Breast epithelium (tissue), 4 donors: ENCODE measurements at regions of chr7 and their contacts with region 1.

Region 1: DNA sequence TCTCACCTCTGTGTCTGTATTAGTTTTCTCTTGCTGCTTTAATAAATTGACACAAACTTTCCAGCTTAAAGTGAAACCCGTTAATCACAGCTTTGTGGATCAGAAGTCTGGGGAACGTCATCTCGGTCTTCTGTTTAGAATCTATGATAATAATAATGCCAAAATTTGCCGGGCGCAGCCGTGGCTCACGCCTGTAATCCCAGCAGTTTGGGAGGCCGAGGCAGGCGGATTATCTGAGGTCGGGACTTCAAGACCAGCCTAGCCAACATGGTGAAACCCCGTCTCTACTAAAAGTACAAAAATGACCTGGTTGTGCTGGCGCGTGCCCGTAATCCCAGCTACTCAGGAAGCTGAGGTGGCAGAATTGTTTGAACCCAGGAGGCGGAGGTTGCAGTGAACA is 8.8 kb upstream of the ZPBP start:
- DNase-seq: no peak
- H3K4me3 ChIP-seq: no peak overlapping the region
- H3K27ac ChIP-seq: no peak overlapping the region
- H3K4me1 ChIP-seq: no peaks in the 10 kb centered on the region
- H3K27me3 ChIP-seq: peaks cover 0 to 5% of the 10 kb centered on the region in 2 donors
- CTCF ChIP-seq: no peak
- POLR2A ChIP-seq: no peak

Region 2: DNA sequence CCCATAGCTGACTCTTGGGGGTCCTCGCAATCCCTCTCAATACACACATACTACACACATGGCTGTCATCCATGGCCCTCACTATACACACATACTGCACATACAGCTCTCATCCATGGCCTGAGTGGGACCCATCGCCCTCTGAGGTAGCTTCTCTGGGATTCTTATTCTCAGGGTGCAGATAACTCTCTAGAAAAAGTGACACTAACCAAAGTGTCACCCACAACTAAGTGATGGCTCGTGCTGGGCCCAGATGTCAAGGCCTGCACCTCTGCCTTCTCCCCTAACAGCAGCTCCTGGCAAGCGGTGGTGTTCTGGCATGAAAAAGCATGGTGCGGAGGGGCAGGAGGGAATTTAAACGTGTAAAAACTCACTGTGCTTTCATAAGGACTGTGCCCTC is 53.9 kb after region 1 on chr7:
- intact Hi-C with region 1: loop called (anchors 2 kb)
- DNase-seq: no peak
- H3K4me3 ChIP-seq: no peak overlapping the region
- H3K27ac ChIP-seq: no peak overlapping the region
- H3K4me1 ChIP-seq: no peaks in the 10 kb centered on the region
- H3K27me3 ChIP-seq: no peaks in the 10 kb centered on the region
- CTCF ChIP-seq: no peak
- POLR2A ChIP-seq: no peak